ENCODE measurements at regions of chr19 and their contacts with region 1.

Region 1: GRCh38 chr19:54521022-54521859 is 18.6 kb downstream of the LAIR2 start:
- DNase-seq: peak in 2 of 9 donors; percentile 1 to 36
- ATAC-seq: no peak
- H3K4me3 ChIP-seq: peak overlapping the region; percentile 2
- H3K4me3 Mint-ChIP-seq: peak overlapping the region; percentile 27 to 81 (median 67)
- H3K27ac ChIP-seq: no peak overlapping the region
- H3K27ac Mint-ChIP-seq: peak overlapping the region in 3 of 9 donors; percentile 12 to 87 (median 26)
- H3K4me1 ChIP-seq: peaks cover 13 to 16% of the 10 kb centered on the region in 2 donors
- H3K4me1 Mint-ChIP-seq: peaks cover 25 to 56% (median 39%) of the 10 kb centered on the region in 7 donors
- H3K27me3 ChIP-seq: no peaks in the 10 kb centered on the region
- H3K27me3 Mint-ChIP-seq: peaks cover 2 to 33% (median 24%) of the 10 kb centered on the region in 5 donors

Region 2: GRCh38 chr19:54451331-54451871 is 69.8 kb before region 1 on chr19:
- CTCF ChIA-PET with region 1: no interaction called
- POLR2A ChIA-PET with region 1: no interaction called
- intact Hi-C with region 1: no loop called
- DNase-seq: peak in 1 of 9 donors; percentile 3
- ATAC-seq: no peak
- H3K4me3 ChIP-seq: peak overlapping the region; percentile 85
- H3K4me3 Mint-ChIP-seq: peak overlapping the region; percentile 93 to 99 (median 97)
- H3K27ac ChIP-seq: peak overlapping the region; percentile 94
- H3K27ac Mint-ChIP-seq: peak overlapping the region; percentile 80 to 100 (median 98)
- H3K4me1 ChIP-seq: peaks cover 19 to 39% of the 10 kb centered on the region in 2 donors
- H3K4me1 Mint-ChIP-seq: peaks cover 31 to 62% (median 49%) of the 10 kb centered on the region in 7 donors
- H3K27me3 ChIP-seq: no peaks in the 10 kb centered on the region
- H3K27me3 Mint-ChIP-seq: peaks cover 0 to 3% (median 0%) of the 10 kb centered on the region in 5 donors

Region 3: DNA sequence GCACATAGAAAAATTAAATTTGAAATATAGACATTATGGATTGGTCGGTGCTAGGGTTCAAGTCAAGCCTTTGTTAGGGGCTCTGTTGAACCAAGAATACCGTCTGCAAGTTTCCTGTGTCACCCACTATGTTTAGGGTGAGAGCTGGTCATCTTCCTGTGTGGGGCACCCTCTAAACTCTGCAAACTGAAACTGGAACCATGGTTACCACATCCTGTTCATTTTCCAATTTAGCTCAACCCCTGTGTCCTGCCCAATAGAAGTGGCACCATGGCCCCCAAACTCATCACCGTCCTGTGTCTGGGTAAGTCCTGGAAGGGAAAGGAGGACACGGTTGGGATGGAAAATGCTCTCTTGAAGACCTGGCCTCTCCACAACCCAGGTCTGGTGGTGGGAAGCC is 11.3 kb after region 1 on chr19:
- CTCF ChIA-PET with region 1: no interaction called
- POLR2A ChIA-PET with region 1: no interaction called
- intact Hi-C with region 1: loop called in 1 of 2 experiments (anchors 1 kb)
- DNase-seq: no peak
- ATAC-seq: peak; percentile 79
- H3K4me3 ChIP-seq: no peak overlapping the region
- H3K4me3 Mint-ChIP-seq: peak overlapping the region in 2 of 10 donors; percentile 57 to 68
- H3K27ac ChIP-seq: no peak overlapping the region
- H3K27ac Mint-ChIP-seq: peak overlapping the region in 1 of 9 donors; percentile 76
- H3K4me1 ChIP-seq: peaks cover 0 to 17% of the 10 kb centered on the region in 2 donors
- H3K4me1 Mint-ChIP-seq: peaks cover 0 to 55% (median 0%) of the 10 kb centered on the region in 7 donors
- H3K27me3 ChIP-seq: no peaks in the 10 kb centered on the region
- H3K27me3 Mint-ChIP-seq: peaks cover 20 to 65% (median 47%) of the 10 kb centered on the region in 5 donors

Region 4: DNA sequence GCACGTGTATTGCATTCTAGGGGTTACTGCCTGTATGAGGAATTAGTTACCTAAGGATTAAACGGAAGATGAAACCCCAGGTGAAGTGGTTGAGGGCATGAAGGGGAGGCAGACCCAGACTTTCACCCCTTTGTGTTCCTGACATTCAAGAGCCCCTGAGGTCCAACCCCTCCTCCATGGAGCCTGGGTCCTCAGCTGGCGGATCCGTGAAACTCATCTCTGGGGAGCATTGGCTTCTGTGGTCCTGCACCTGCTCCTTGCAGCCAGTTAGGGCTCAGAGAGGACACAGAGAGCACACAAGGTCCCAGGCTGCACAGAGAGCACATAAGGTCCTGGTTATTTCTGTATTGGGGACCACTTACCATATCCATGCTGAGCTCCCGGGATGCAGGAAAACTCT is 65.2 kb after region 1 on chr19:
- CTCF ChIA-PET with region 1: no interaction called
- POLR2A ChIA-PET with region 1: no interaction called
- intact Hi-C with region 1: no loop called
- DNase-seq: no peak
- ATAC-seq: no peak
- H3K4me3 ChIP-seq: no peak overlapping the region
- H3K4me3 Mint-ChIP-seq: no peak overlapping the region
- H3K27ac ChIP-seq: no peak overlapping the region
- H3K27ac Mint-ChIP-seq: no peak overlapping the region
- H3K4me1 ChIP-seq: no peaks in the 10 kb centered on the region
- H3K4me1 Mint-ChIP-seq: peaks cover 0 to 2% (median 0%) of the 10 kb centered on the region in 7 donors
- H3K27me3 ChIP-seq: no peaks in the 10 kb centered on the region
- H3K27me3 Mint-ChIP-seq: peaks cover 24 to 69% (median 44%) of the 10 kb centered on the region in 5 donors

Measured in naive thymus-derived CD4-positive, alpha-beta T cell (primary cell).